MCF 10A (cell line): ENCODE measurements at regions of chr1 and their contacts with region 1.

Region 1: GRCh38 chr1:10472220-10473144 is at the start of gene DFFA:
- DNase-seq: peak; percentile 96
- H3K4me3 Mint-ChIP-seq: peak within 1 kb of the TSS; percentile 97
- H3K27ac Mint-ChIP-seq: peak within 1 kb of the TSS; percentile 94
- H3K4me1 Mint-ChIP-seq: peaks cover 7% of the 10 kb centered on the region
- H3K27me3 Mint-ChIP-seq: no peaks in the 10 kb centered on the region
- CTCF ChIP-seq: no peak
- total RNA-seq, gene DFFA: 51.3 and 55.7 TPM in 2 replicates

Region 2: GRCh38 chr1:10459181-10459580 is 13.3 kb before region 1 on chr1:
- CTCF ChIA-PET with region 1: interaction called, 4 read pairs
- POLR2A ChIA-PET with region 1: interaction called, 23 read pairs
- intact Hi-C with region 1: no loop called
- DNase-seq: peak; percentile 88
- H3K4me3 Mint-ChIP-seq: no peak overlapping the region
- H3K27ac Mint-ChIP-seq: peak overlapping the region; percentile 39
- H3K4me1 Mint-ChIP-seq: peaks cover 12% of the 10 kb centered on the region
- H3K27me3 Mint-ChIP-seq: no peaks in the 10 kb centered on the region
- CTCF ChIP-seq: no peak